ENCODE measurements at regions of chr9 and their contacts with region 1.

Region 1: DNA sequence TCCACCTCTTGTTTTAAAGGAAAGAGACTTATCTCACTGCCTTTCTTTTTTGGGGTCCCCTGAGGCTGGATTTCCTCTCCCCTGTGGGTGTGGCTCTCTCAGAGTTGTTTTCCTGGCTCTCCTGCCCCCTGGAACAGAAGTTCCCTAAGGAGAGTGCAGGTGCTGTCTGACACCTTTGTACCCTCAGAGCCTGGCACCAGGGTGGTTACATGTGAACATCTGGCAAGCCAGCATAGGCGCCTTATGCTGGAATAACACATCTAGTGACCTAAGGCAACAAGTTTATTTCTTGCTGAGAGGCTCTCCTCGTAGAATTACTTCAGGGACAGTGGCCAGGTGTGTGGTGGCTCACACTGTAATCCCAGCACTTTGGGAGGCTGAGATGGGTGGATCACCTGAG is 172.9 kb upstream of the PTCH1 start:
- DNase-seq: no peak
- ATAC-seq: no peak
- H3K4me3 ChIP-seq: no peak overlapping the region
- H3K27ac ChIP-seq: no peak overlapping the region
- H3K4me1 ChIP-seq: no peaks in the 10 kb centered on the region
- H3K27me3 ChIP-seq: no peaks in the 10 kb centered on the region
- CTCF ChIP-seq: no peak
- POLR2A ChIP-seq: no peak

Region 2: GRCh38 chr9:95626885-95627558 is 62.6 kb before region 1 on chr9:
- in situ Hi-C with region 1: loop called in 1 of 4 experiments (anchors 10 kb)
- intact Hi-C with region 1: no loop called
- DNase-seq: peak in 1 of 2 donors; percentile 19
- ATAC-seq: peak; percentile 33 to 61
- H3K4me3 ChIP-seq: peak overlapping the region in 1 of 4 donors; percentile 22
- H3K27ac ChIP-seq: peak overlapping the region; percentile 59 to 67 (median 62)
- H3K4me1 ChIP-seq: no peaks in the 10 kb centered on the region
- H3K27me3 ChIP-seq: no peaks in the 10 kb centered on the region
- CTCF ChIP-seq: no peak
- POLR2A ChIP-seq: peak in 1 of 2 donors; percentile 24

Region 3: DNA sequence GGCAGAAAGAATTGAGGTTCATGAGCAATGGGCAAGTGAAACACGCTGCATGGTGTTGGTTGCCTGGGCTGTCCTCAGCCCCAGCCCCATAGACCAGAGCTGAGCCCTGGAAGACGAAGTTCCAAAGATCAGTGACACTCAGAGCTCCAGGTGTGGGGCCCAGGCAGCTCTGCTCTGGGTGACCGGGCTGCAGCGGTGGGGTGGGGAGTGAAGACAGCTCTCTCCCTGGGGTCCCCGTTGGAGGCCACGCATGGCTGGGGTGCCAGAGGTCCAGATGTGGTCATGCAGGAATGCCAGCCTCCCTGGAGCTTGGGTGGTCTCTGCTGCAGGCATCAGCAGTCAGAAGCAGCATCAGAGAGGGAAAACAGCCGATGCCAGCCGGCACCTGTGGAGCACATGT is 20.8 kb after region 1 on chr9:
- in situ Hi-C with region 1: no loop called
- intact Hi-C with region 1: no loop called
- DNase-seq: no peak
- ATAC-seq: no peak
- H3K4me3 ChIP-seq: no peak overlapping the region
- H3K27ac ChIP-seq: no peak overlapping the region
- H3K4me1 ChIP-seq: no peaks in the 10 kb centered on the region
- H3K27me3 ChIP-seq: no peaks in the 10 kb centered on the region
- CTCF ChIP-seq: no peak
- POLR2A ChIP-seq: no peak

Measured in gastrocnemius medialis (tissue), 4 donors.